HepG2 (cell line): ENCODE measurements at regions of chr11 and their contacts with region 1.

Region 1: DNA sequence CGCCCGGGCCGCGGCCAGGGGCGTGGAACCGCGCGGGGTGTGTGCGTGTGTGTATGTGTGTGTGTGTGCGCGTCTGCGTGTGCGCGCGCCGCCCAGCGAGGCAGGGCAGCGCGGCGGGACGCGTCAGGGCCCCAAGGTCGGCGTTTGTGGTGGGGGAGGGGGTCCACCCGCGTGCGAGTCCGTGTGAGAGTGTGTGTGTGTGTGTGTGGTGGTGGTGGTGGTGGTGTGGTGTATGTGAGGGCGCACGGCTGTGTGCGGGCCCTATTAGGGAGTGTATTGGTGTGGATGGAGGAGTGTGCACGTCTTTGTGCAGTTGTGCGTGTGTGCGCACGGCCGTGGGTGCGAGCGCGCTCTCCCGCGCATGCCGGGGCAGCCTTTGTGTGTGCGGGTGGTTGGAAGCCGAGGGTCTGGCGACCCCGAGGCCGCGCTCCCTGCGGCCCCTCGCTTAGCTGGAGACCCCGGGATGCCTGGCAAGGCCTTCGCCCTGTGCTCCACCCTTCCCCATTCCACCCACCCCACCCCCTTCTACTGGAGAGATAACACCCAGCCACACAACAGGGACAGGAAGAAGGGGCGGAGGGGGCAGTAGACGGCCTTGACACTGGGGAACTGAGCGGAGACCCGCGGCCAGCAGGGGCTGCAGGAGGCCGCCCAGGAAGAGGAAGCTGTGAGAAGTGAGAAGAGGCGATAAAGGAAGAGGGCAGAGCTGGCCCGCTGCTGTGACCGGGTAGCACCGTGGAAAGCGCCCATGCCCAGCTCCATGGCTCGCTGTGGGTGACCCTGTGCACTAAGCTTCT is 528 bp upstream of the ARRB1 start:
- DNase-seq: peak; percentile 90
- ATAC-seq: peak; percentile 83
- H3K4me3 ChIP-seq: peak overlapping the region; percentile 63 to 86 (median 84)
- H3K27ac ChIP-seq: peak overlapping the region; percentile 85
- H3K4me1 ChIP-seq: peaks cover 52% of the 10 kb centered on the region
- H3K27me3 ChIP-seq: peaks cover 5 to 14% of the 10 kb centered on the region in 2 experiments; a peak in 3 of 5 replicates
- CTCF ChIP-seq: peak; percentile 74
- EP300 ChIP-seq: peak in 1 of 2 experiments; percentile 76; a peak in 2 of 4 replicates
- POLR2A ChIP-seq: no peak
- RAD21 ChIP-seq: peak; percentile 57; the same call in 1 of the 2 replicates

Region 2: DNA sequence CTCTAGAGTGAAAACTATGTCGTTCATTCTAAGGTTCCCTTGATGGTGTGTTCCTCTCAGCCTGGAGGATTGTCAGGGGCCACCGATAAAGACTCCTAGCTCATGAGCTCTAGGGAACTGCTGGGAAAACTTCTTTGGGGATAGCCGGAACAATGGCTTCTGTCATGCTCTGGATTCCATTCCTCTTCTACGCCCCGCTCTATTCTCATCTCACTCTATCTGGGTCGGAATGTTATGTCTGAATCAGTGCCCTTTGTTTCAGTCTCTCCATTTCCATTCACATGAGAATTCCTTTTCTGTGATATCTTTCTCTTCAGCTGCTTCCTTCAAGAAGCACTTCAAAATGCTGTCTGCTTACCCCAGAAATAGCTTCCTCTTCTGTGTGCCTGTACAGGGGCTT is 218.0 kb before region 1 on chr11:
- CTCF ChIA-PET with region 1: no interaction called
- POLR2A ChIA-PET with region 1: no interaction called
- in situ Hi-C with region 1: no loop called
- intact Hi-C with region 1: no loop called
- DNase-seq: no peak
- ATAC-seq: no peak
- H3K4me3 ChIP-seq: no peak overlapping the region
- H3K27ac ChIP-seq: no peak overlapping the region
- H3K4me1 ChIP-seq: no peaks in the 10 kb centered on the region
- H3K27me3 ChIP-seq: peaks cover 1 to 19% of the 10 kb centered on the region in 2 experiments; a peak in 3 of 5 replicates
- CTCF ChIP-seq: no peak
- EP300 ChIP-seq: no peak
- POLR2A ChIP-seq: no peak
- RAD21 ChIP-seq: no peak

Region 3: DNA sequence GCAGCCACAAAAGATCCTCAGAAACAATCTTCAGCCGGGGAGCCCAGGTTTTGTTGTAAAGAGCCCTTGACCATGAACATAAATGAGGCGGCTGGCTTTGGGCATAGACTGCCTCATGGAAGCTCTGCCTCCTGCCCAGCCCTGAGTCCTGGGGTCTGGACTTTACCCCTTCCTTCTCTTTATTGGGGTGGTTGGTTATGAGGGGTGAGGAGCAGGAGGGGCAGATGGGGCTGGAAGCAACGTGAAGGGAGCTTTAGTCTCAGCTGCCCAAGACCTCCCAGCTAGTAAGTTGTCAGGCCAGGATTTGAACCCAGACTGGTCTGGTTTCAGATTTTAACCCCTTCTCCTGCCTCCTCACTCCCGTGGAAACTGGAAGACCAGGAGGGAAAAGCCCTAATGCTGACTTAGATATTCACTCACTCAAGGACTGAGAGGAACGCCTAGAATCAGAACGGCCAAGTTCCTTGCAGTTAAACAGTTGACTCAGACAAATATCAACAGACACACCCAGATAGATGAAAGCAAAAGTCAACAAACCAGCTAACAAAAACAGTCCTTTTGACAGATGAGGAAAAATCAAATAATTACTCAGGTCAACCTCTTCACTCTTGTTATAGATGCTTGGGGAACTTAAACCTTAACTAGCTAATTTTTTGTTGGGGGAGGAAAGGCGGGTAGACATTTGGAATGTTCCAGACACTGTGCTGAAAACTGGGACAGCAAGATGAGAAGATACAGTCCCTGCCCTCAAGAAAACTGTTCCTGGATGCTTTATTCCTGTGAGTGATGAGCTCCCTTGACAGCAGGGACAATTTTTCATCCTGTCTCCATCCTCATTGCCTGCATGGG is 20.2 kb after region 1 on chr11:
- CTCF ChIA-PET with region 1: no interaction called
- POLR2A ChIA-PET with region 1: interaction called, 13 read pairs
- in situ Hi-C with region 1: no loop called
- intact Hi-C with region 1: no loop called
- DNase-seq: peak; percentile 65
- ATAC-seq: peak; percentile 64
- H3K4me3 ChIP-seq: no peak overlapping the region
- H3K27ac ChIP-seq: no peak overlapping the region
- H3K4me1 ChIP-seq: peaks cover 45% of the 10 kb centered on the region
- H3K27me3 ChIP-seq: peaks cover 6 to 35% of the 10 kb centered on the region in 2 experiments
- CTCF ChIP-seq: no peak
- EP300 ChIP-seq: peak in 1 of 2 experiments; percentile 73; a peak in 1 of 4 replicates
- POLR2A ChIP-seq: no peak
- RAD21 ChIP-seq: no peak

Region 4: DNA sequence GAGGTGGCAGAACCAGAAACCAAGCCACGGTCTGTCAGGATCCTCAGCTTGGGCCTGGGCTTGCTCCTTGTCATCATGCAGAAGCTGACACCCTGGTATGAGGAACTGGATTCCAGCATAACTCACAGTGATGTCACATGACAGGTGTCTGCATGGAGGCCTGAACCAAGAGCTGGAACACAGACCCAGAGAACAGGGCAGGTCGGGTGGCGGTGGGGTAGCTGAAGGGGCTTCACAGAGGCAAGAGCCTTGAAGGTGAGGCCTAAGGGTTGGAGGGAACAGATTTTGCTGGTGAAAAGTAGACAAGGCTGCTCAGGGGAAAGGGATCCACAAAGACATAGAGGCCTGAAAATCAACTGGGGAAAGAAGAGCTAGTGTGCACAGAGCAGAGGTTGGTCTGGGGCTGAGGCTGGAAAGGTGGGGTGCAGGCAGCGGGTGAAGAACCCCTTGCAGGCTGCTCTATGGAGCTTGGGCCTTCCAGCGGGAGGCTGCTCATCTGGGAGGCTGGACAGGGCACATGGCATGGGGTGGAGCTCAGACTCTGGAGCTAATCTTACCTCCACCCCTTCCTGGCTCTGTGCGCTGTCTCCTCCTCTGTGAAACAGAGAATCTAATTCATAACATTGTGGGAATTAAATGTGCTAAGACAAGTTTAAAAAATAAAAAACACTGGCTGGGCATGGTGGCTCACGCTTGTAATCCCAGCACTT is 28.9 kb after region 1 on chr11:
- CTCF ChIA-PET with region 1: interaction called, 6 read pairs
- POLR2A ChIA-PET with region 1: interaction called, 8 read pairs
- in situ Hi-C with region 1: no loop called
- intact Hi-C with region 1: loop called (anchors 2 kb)
- DNase-seq: peak; percentile 60
- ATAC-seq: peak; percentile 79
- H3K4me3 ChIP-seq: peak overlapping the region in 1 of 3 experiments; percentile 31; a peak in 1 of 6 replicates
- H3K27ac ChIP-seq: no peak overlapping the region
- H3K4me1 ChIP-seq: peaks cover 53% of the 10 kb centered on the region
- H3K27me3 ChIP-seq: peaks cover 4% of the 10 kb centered on the region in 2 experiments; a peak in 4 of 5 replicates
- CTCF ChIP-seq: no peak
- EP300 ChIP-seq: no peak
- POLR2A ChIP-seq: no peak
- RAD21 ChIP-seq: no peak